ENCODE measurements at regions of chr20 and their contacts with region 1.

Region 1: DNA sequence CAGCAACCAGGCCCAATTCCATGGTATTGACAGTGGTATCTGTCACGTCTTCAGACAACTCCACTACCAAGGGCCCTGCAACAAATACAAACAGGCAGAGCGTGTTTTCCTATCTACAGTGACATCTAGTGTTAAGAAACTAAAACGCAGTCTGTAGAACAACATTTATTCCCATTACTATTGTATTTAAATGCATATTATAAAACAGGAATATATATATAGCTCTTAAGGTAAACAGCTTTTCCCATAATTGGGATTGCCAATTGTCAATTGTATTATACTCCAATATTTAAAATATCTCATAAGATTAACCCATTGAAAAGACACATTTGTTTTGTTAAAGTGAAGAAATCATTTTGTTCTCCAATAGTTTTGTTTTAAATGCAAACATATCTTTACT is 97.2 kb downstream of the KIF16B start:
- DNase-seq: no peak
- H3K4me3 ChIP-seq: no peak overlapping the region
- H3K27ac ChIP-seq: no peak overlapping the region
- H3K27me3 ChIP-seq: no peaks in the 10 kb centered on the region
- CTCF ChIP-seq: peak; percentile 66

Region 2: GRCh38 chr20:15708984-15709598 is 766.9 kb before region 1 on chr20:
- CTCF ChIA-PET with region 1: interaction called, 14 read pairs
- POLR2A ChIA-PET with region 1: no interaction called
- DNase-seq: no peak
- H3K4me3 ChIP-seq: no peak overlapping the region
- H3K27ac ChIP-seq: no peak overlapping the region
- H3K27me3 ChIP-seq: no peaks in the 10 kb centered on the region
- CTCF ChIP-seq: peak; percentile 54

Region 3: DNA sequence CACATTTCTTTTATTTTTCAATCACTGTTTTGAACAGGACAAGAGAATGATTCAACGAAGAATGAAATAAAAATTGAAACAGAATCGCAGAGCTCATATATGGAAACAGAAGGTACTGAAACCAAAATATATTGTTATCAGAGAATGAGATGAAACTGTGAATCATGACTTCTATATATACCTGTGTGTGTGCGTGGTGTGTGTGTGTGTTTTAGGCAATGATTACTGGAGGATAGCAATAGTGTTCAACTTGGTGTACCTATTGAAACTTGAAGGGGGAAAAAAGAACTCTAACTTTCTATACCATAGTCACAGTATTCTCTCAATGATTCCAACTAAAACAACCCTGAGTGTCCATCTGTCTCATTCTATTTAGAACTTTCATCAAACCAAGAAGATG is 489.3 kb before region 1 on chr20:
- CTCF ChIA-PET with region 1: no interaction called
- POLR2A ChIA-PET with region 1: no interaction called
- DNase-seq: no peak
- H3K4me3 ChIP-seq: no peak overlapping the region
- H3K27ac ChIP-seq: no peak overlapping the region
- H3K27me3 ChIP-seq: no peaks in the 10 kb centered on the region
- CTCF ChIP-seq: no peak

Region 4: GRCh38 chr20:16279320-16279719 is 196.7 kb before region 1 on chr20:
- CTCF ChIA-PET with region 1: interaction called, 18 read pairs
- POLR2A ChIA-PET with region 1: no interaction called
- DNase-seq: no peak
- H3K4me3 ChIP-seq: no peak overlapping the region
- H3K27ac ChIP-seq: no peak overlapping the region
- H3K27me3 ChIP-seq: no peaks in the 10 kb centered on the region
- CTCF ChIP-seq: no peak

Region 5: DNA sequence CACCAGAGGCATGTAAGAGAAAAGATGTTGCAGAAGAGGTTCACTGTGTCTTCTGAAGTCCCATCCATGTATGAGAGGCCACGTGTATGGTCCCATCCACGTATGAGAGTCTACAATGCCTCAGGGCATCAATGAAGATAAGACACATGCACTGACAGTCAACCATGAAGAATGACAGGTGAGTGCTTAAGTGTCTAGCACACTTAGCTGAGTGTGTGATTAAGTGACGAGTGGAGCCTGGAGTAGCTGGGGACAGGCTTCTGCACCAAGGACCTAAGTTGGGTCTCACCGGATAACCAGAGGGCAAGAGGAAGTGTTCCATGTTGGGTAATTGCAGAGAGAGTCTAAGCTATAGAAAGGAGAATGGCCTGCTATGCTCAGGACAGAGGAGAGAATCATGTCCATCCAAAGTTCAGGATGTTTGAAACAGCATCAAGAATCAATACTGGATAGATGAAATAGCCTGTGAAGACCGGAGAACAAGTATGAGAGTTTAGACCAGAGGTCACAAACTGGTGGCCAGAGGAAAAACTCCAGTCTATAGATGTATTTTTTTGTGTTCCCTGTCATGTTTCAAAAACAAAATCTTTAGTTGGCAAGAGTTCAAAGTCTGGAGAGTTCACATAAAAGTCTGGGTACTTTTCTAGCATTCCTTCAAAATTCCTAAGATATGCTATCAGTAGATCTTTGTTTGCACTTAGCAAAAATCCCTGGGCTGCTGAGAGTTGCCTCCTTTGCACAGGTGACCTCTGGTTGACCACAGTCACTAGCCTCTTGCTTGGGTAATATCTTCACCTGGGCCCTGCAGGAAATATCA is 68.6 kb before region 1 on chr20:
- CTCF ChIA-PET with region 1: no interaction called
- POLR2A ChIA-PET with region 1: no interaction called
- DNase-seq: no peak
- H3K4me3 ChIP-seq: no peak overlapping the region
- H3K27ac ChIP-seq: no peak overlapping the region
- H3K27me3 ChIP-seq: no peaks in the 10 kb centered on the region
- CTCF ChIP-seq: no peak

Region 6: GRCh38 chr20:16451982-16452381 is 24.1 kb before region 1 on chr20:
- CTCF ChIA-PET with region 1: interaction called, 18 read pairs
- POLR2A ChIA-PET with region 1: no interaction called
- DNase-seq: no peak
- H3K4me3 ChIP-seq: no peak overlapping the region
- H3K27ac ChIP-seq: no peak overlapping the region
- H3K27me3 ChIP-seq: no peaks in the 10 kb centered on the region
- CTCF ChIP-seq: no peak

Region 7: DNA sequence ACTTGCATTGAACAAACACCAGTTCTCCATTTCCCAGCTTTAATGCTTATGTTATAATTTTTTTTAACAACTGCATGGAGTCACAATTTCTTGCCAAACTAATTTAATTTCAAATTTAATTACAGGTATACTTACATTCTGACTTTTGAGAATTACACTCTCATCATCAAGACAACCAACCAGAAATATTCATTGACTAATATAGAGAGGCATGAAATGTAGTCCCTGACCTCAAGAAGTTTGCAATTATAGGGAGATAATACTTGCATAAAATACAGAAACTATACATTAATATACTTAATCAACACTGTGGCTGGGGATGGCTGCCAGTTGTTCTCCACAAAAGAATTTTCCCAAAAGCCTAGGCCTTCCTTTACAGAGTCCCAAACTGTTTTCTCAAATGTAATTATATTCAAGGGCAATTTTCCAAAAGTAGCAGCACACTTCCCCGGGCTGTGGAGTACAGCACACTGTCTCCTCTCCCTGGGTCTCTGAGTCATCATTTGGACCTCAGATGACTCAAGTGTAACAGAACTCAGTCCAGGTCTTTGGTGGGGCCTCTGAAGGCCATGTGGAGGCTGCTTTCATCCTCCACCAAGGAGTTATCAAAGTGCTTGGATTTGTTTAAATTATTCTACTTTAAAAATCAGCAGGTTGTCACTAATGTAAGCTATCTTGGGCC is 16.9 kb before region 1 on chr20:
- CTCF ChIA-PET with region 1: interaction called, 11 read pairs
- POLR2A ChIA-PET with region 1: no interaction called
- DNase-seq: peak; percentile 33
- H3K4me3 ChIP-seq: no peak overlapping the region
- H3K27ac ChIP-seq: no peak overlapping the region
- H3K27me3 ChIP-seq: no peaks in the 10 kb centered on the region
- CTCF ChIP-seq: no peak

Measured in AG04450 (cell line).